ENCODE measurements at regions of chr10 and their contacts with region 1.

Region 1: GRCh38 chr10:43105102-43105785 is 28.4 kb downstream of the RET start:
- DNase-seq: peak; percentile 78 to 86
- ATAC-seq: peak; percentile 90 to 94 (median 94)
- H3K4me3 ChIP-seq: peak overlapping the region; percentile 41
- H3K4me3 Mint-ChIP-seq: peak overlapping the region; percentile 85
- H3K27ac ChIP-seq: no peak overlapping the region
- H3K27ac Mint-ChIP-seq: peak overlapping the region in 1 of 2 donors; percentile 52
- H3K4me1 ChIP-seq: peaks cover 32% of the 10 kb centered on the region
- H3K4me1 Mint-ChIP-seq: peaks cover 0 to 24% of the 10 kb centered on the region in 2 donors
- H3K27me3 ChIP-seq: peaks cover 2% of the 10 kb centered on the region
- H3K27me3 Mint-ChIP-seq: peaks cover 15 to 16% of the 10 kb centered on the region in 2 donors
- CTCF ChIP-seq: peak; percentile 100

Region 2: GRCh38 chr10:42827201-42827600 is 278.0 kb before region 1 on chr10:
- intact Hi-C with region 1: no loop called
- DNase-seq: no peak
- ATAC-seq: no peak
- H3K4me3 ChIP-seq: no peak overlapping the region
- H3K4me3 Mint-ChIP-seq: no peak overlapping the region
- H3K27ac ChIP-seq: no peak overlapping the region
- H3K27ac Mint-ChIP-seq: no peak overlapping the region
- H3K4me1 ChIP-seq: no peaks in the 10 kb centered on the region
- H3K4me1 Mint-ChIP-seq: peaks cover 5 to 6% of the 10 kb centered on the region in 2 donors
- H3K27me3 ChIP-seq: no peaks in the 10 kb centered on the region
- H3K27me3 Mint-ChIP-seq: no peaks in the 10 kb centered on the region
- CTCF ChIP-seq: no peak

Region 3: DNA sequence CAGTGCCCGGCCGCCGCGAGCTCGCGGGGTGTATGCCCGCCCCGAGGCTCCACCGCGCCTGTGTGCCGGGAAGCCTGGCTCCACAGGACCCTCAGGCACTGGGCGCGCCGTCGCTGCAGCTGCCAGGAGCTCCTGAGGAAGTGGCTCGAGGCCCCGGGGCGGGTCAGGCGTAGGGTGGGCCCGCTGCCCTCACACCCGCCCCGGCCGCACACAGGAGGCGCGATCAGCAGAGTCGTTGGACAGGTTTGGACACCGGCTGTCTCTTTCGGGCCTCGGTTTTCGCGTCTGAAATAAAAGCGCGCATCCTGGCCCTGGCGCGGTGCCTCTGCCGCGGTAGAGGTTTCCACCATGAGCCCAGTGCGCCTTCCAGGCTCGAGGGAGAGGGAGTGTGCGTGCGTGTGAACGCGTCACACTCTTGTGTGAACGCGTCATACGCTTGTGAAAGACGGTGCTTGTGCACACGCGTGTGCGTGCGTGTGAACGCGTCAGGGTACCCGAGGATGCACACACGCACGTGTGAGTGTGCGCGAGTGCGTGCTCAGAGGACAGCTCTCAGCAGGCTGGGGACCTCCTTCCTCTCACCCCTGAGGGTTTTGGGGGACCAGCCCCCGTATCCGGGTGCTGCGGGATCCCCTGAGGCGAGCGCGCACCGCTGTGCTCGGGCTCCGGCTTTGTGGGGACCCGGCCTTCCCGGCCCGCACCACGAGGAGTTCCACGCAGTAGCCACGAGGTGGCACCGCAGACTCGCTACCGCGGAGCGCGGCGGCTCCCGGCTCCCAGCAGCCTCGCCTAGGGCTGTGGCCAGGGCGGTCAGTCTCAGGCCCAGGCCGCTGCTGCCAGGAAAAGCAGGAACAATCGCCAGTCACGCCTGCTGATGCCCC is 238.9 kb before region 1 on chr10:
- intact Hi-C with region 1: loop called (anchors 2 kb)
- DNase-seq: peak; percentile 31 to 71
- ATAC-seq: peak; percentile 68 to 84 (median 75)
- H3K4me3 ChIP-seq: no peak overlapping the region
- H3K4me3 Mint-ChIP-seq: no peak overlapping the region
- H3K27ac ChIP-seq: no peak overlapping the region
- H3K27ac Mint-ChIP-seq: no peak overlapping the region
- H3K4me1 ChIP-seq: peaks cover 10% of the 10 kb centered on the region
- H3K4me1 Mint-ChIP-seq: no peaks in the 10 kb centered on the region
- H3K27me3 ChIP-seq: peaks cover 2% of the 10 kb centered on the region
- H3K27me3 Mint-ChIP-seq: peaks cover 27 to 47% of the 10 kb centered on the region in 2 donors
- CTCF ChIP-seq: peak; percentile 39

Region 4: GRCh38 chr10:43120929-43121314 is 15.7 kb after region 1 on chr10:
- intact Hi-C with region 1: loop called (anchors 2 kb)
- DNase-seq: peak; percentile 61 to 71
- ATAC-seq: peak; percentile 95 to 99 (median 97)
- H3K4me3 ChIP-seq: no peak overlapping the region
- H3K4me3 Mint-ChIP-seq: peak overlapping the region; percentile 76
- H3K27ac ChIP-seq: peak overlapping the region; percentile 75
- H3K27ac Mint-ChIP-seq: peak overlapping the region; percentile 90 to 95
- H3K4me1 ChIP-seq: peaks cover 34% of the 10 kb centered on the region
- H3K4me1 Mint-ChIP-seq: peaks cover 25 to 34% of the 10 kb centered on the region in 2 donors
- H3K27me3 ChIP-seq: no peaks in the 10 kb centered on the region
- H3K27me3 Mint-ChIP-seq: no peaks in the 10 kb centered on the region
- CTCF ChIP-seq: no peak

Measured in natural killer cell (primary cell).